WTC11 (cell line): ENCODE measurements at regions of chr7 and their contacts with region 1.

Region 1: DNA sequence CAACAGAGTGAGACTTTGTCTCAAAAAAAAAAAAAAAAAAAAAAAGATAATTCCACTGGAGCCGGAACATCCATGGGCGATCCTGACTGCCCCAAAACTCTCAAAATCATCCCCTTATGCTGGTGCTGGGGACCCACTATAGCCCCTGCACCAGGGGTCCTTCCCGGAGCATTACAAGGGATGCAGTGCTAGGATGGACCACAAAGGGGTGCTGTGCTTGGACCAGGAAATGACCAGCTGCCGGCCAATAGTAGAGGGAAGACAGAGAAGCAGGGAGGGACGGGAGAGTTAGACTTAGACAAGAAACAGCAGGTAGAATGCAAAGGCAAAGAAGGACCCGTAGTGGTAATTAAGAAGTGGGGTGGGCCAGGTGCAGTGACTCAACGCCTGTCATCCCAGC is 40.6 kb downstream of the RCC1L start:
- DNase-seq: peak; percentile 67
- ATAC-seq: peak; percentile 89
- H3K4me3 Mint-ChIP-seq: no peak overlapping the region
- H3K27ac Mint-ChIP-seq: no peak overlapping the region
- H3K4me1 Mint-ChIP-seq: no peaks in the 10 kb centered on the region
- H3K27me3 Mint-ChIP-seq: no peaks in the 10 kb centered on the region
- CTCF ChIP-seq: 0 out of 2 replicates have a peak, but pooled peaks have one; percentile 16

Region 2: GRCh38 chr7:74043523-74043951 is 989.5 kb before region 1 on chr7:
- CTCF ChIA-PET with region 1: no interaction called
- POLR2A ChIA-PET with region 1: no interaction called
- DNase-seq: peak; percentile 50
- ATAC-seq: peak; percentile 77
- H3K4me3 Mint-ChIP-seq: peak overlapping the region; percentile 45; the same call in 1 of the 2 replicates
- H3K27ac Mint-ChIP-seq: peak overlapping the region; percentile 84; the same call in 1 of the 2 replicates
- H3K4me1 Mint-ChIP-seq: peaks cover 48% of the 10 kb centered on the region
- H3K27me3 Mint-ChIP-seq: no peaks in the 10 kb centered on the region
- CTCF ChIP-seq: no peak

Region 3: GRCh38 chr7:75045881-75046280 is 12.8 kb after region 1 on chr7:
- CTCF ChIA-PET with region 1: interaction called, 18 read pairs
- POLR2A ChIA-PET with region 1: no interaction called
- DNase-seq: no peak
- ATAC-seq: no peak
- H3K4me3 Mint-ChIP-seq: no peak overlapping the region
- H3K27ac Mint-ChIP-seq: no peak overlapping the region
- H3K4me1 Mint-ChIP-seq: peaks cover 2% of the 10 kb centered on the region; the same call in 1 of the 2 replicates
- H3K27me3 Mint-ChIP-seq: no peaks in the 10 kb centered on the region
- CTCF ChIP-seq: no peak